WTC11 (cell line): ENCODE measurements at regions of chr6 and their contacts with region 1.

Region 1: GRCh38 chr6:139219271-139219729 is 72.5 kb downstream of the TXLNB start:
- DNase-seq: peak; percentile 77
- ATAC-seq: peak; percentile 100
- H3K4me3 Mint-ChIP-seq: peak overlapping the region; percentile 27; the same call in 1 of the 2 replicates
- H3K27ac Mint-ChIP-seq: peak overlapping the region; percentile 97
- H3K4me1 Mint-ChIP-seq: peaks cover 5% of the 10 kb centered on the region
- H3K27me3 Mint-ChIP-seq: no peaks in the 10 kb centered on the region
- CTCF ChIP-seq: peak; percentile 29; the same call in 1 of the 2 replicates

Region 2: GRCh38 chr6:139230391-139230840 is 11.1 kb after region 1 on chr6:
- CTCF ChIA-PET with region 1: interaction called, 21 read pairs
- POLR2A ChIA-PET with region 1: no interaction called
- DNase-seq: no peak
- ATAC-seq: peak; percentile 82
- H3K4me3 Mint-ChIP-seq: no peak overlapping the region
- H3K27ac Mint-ChIP-seq: no peak overlapping the region; the same call in 1 of the 2 replicates
- H3K4me1 Mint-ChIP-seq: peaks cover 6% of the 10 kb centered on the region; the same call in 1 of the 2 replicates
- H3K27me3 Mint-ChIP-seq: peaks cover 6% of the 10 kb centered on the region
- CTCF ChIP-seq: no peak

Region 3: GRCh38 chr6:139262519-139263300 is 43.4 kb after region 1 on chr6:
- CTCF ChIA-PET with region 1: interaction called, 15 read pairs
- POLR2A ChIA-PET with region 1: no interaction called
- DNase-seq: no peak
- ATAC-seq: no peak
- H3K4me3 Mint-ChIP-seq: no peak overlapping the region
- H3K27ac Mint-ChIP-seq: peak overlapping the region; percentile 53
- H3K4me1 Mint-ChIP-seq: peaks cover 5% of the 10 kb centered on the region; the same call in 1 of the 2 replicates
- H3K27me3 Mint-ChIP-seq: no peaks in the 10 kb centered on the region
- CTCF ChIP-seq: no peak

Region 4: DNA sequence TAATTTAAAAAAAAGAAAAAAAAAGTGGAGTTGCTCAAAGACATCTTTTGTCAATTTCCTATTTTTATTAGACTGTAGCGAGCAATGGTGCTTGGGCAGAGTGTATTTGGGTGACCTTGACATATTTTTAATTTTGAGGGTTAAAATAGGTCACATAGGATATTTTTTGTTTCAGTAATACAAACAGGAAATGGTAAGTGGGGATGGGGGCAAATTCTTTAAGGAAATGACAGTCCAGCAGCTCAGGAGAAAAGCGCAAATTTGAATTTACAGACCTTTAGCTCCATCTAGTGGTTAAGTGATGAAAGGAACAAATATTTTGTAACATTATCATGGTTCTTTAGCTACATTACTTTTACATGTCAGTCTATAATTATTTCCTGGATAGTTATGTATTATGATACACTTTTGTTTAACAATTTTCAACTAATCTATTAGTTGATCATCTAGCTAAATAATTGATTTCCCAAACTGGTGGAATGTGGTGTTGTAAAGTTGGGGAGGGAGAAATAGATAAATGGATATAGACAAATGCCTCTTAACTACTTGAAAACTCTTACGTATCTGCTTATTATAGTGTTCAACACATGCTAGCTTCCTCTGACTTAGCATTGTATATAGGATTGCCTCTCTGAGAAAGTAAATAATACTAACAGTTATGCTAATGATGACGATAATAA is 145.1 kb after region 1 on chr6:
- CTCF ChIA-PET with region 1: interaction called, 94 read pairs
- POLR2A ChIA-PET with region 1: interaction called, 3 read pairs
- DNase-seq: no peak
- ATAC-seq: no peak
- H3K4me3 Mint-ChIP-seq: no peak overlapping the region
- H3K27ac Mint-ChIP-seq: 0 out of 2 replicates have a peak overlapping the region, but pooled peaks have one; percentile 16
- H3K4me1 Mint-ChIP-seq: peaks cover 47% of the 10 kb centered on the region
- H3K27me3 Mint-ChIP-seq: no peaks in the 10 kb centered on the region
- CTCF ChIP-seq: peak; percentile 49; the same call in 1 of the 2 replicates

Region 5: DNA sequence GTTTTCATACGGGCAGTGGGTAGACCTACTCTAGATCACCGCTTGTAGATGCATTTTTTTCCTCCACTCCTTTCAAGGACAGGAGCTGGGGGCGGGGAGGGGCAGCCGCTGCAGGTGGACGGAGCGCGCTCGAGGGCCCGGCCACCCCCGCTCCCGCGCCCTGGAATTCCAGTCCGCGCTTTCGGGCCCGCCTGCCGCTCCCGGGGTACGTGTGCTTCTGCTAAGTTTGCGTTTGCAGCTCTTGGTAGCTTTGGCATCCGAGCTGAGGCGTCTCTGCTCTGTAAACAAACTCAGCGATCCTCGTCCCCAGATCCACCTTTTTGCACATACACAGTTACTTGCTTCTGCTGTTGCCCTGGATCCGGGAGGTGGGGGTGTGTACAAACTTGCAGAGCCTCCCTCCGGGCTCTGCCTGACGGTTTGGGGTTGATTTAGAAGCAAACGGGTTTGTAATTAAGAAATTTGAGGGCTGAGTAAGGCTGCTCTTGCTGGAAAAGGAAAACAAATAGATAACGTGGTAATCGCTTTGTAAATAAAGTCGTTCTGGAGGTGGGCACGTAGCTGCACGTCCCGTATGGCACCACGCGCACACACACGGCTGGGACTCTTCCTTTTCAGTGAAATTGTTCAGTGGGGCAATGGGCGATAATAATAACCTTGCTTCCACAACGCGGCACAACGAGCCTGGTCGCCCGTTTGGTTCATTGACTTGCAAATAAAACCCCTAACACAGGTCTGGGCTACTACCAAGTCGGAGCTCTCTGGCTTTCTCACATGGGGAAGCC is 156.1 kb after region 1 on chr6:
- CTCF ChIA-PET with region 1: interaction called, 13 read pairs
- POLR2A ChIA-PET with region 1: interaction called, 7 read pairs
- DNase-seq: peak; percentile 88
- ATAC-seq: peak; percentile 75
- H3K4me3 Mint-ChIP-seq: peak overlapping the region; percentile 72
- H3K27ac Mint-ChIP-seq: peak overlapping the region; percentile 99
- H3K4me1 Mint-ChIP-seq: peaks cover 32% of the 10 kb centered on the region
- H3K27me3 Mint-ChIP-seq: no peaks in the 10 kb centered on the region
- CTCF ChIP-seq: no peak

Region 6: DNA sequence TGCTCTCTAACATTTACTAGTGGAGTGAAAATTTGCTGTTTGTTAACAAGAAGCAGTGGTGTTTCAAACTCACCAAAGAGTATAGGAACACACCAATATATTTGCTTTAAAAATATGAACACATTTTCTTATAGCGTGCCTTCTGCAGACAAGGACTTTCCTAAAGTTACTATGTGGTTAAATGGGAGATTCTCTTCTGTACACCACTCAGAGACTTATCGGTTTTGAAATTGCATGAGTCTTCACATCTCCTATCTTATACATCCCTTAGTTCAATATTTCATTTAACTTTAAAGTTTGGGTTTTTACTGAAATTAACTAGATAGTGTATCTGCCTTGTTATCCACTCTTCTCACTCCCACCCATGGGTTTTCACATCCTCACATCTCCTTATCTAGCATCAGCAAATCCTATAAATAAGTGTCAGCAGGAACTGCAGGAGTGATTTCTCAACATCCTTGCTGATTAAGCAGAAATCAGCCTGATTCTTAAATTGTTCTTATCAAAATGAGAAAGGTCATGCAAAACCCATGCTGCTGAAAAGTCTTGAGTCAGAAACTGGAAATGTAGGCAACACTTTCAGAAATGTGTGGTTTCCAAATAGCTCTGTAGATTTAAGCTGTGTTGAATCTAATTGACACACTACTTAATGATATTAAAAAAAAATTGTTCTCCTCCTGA is 1837.8 kb after region 1 on chr6:
- CTCF ChIA-PET with region 1: no interaction called
- POLR2A ChIA-PET with region 1: no interaction called
- DNase-seq: no peak
- ATAC-seq: no peak
- H3K4me3 Mint-ChIP-seq: no peak overlapping the region
- H3K27ac Mint-ChIP-seq: no peak overlapping the region
- H3K4me1 Mint-ChIP-seq: peaks cover 6% of the 10 kb centered on the region
- H3K27me3 Mint-ChIP-seq: no peaks in the 10 kb centered on the region
- CTCF ChIP-seq: no peak